ENCODE measurements at regions of chr15 and their contacts with region 1.

Region 1: DNA sequence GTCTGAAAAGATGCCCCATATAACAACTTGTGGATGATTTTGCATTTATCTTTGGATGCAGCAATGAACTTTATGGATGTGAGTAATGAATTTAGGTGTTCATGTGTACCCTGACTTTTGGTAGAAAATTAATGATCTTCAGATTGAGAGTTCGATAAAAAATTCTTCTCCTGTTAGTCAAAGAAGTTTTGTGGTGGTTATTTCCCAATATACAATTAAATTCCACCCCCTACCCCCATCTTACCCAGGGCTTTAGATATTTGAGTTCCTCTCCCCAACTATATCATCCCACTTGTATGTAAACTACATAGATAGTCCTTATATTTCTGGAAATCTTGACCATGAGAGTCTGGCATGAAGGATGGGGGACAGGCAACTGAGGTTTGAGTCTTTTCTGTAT is 126.1 kb upstream of the ALDH1A3 start:
- DNase-seq: no peak
- H3K4me3 ChIP-seq: no peak overlapping the region
- H3K27ac ChIP-seq: no peak overlapping the region
- H3K4me1 ChIP-seq: no peaks in the 10 kb centered on the region
- H3K27me3 ChIP-seq: peaks cover 0 to 2% of the 10 kb centered on the region in 2 experiments
- CTCF ChIP-seq: no peak
- POLR2A ChIP-seq: no peak

Region 2: DNA sequence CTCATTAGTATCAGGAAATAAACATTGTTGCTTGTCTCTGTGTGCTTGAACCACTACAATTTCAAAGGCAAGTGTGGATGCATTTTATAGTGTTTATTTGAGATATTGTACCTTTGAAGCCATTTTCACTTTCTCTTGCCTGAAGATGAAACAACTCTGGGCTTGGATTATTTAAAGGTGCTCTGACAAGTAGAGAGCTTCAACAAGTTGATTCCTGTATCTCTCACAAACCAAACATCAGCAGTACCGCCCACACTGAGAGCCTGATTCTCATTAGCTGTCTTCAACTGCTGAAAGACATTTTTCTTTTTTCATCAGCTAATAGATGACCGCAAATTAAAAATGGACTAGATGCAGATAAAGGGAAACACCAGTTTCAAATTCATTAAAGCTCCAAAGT is 223.9 kb before region 1 on chr15:
- CTCF ChIA-PET with region 1: no interaction called
- POLR2A ChIA-PET with region 1: no interaction called
- dilution Hi-C with region 1: no loop called
- intact Hi-C with region 1: no loop called
- DNase-seq: no peak
- H3K4me3 ChIP-seq: no peak overlapping the region
- H3K27ac ChIP-seq: no peak overlapping the region
- H3K4me1 ChIP-seq: no peaks in the 10 kb centered on the region
- H3K27me3 ChIP-seq: no peaks in the 10 kb centered on the region
- CTCF ChIP-seq: no peak
- POLR2A ChIP-seq: no peak

Region 3: GRCh38 chr15:100737214-100737613 is 16.3 kb before region 1 on chr15:
- CTCF ChIA-PET with region 1: interaction called, 10 read pairs
- POLR2A ChIA-PET with region 1: no interaction called
- dilution Hi-C with region 1: no loop called
- intact Hi-C with region 1: no loop called
- DNase-seq: no peak
- H3K4me3 ChIP-seq: no peak overlapping the region
- H3K27ac ChIP-seq: no peak overlapping the region
- H3K4me1 ChIP-seq: no peaks in the 10 kb centered on the region
- H3K27me3 ChIP-seq: peaks cover 0 to 4% of the 10 kb centered on the region in 2 experiments
- CTCF ChIP-seq: no peak
- POLR2A ChIP-seq: no peak